GM23248 (cell line): ENCODE measurements at regions of chr22 and their contacts with region 1.

Region 1: DNA sequence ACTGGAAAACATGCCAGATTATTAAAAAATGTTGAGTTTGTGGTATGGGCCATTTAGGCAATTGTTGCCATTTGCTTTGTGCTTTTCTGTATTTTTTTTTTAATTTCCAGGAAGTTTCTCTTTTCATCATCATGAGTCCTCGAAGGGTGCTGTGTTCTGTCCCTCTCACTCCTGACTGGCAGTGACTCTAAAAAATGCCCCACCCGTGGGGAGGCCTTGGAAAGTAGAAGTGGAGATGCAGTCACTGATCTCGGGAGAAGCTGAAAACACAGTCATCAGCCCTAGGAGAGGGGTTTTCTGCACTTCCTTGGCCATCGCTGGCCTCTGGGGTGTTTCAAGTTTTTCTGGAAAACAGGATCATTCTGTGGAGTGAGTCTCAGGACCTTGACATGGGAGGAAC is 98.5 kb upstream of the GRK3 start:
- DNase-seq: no peak
- H3K4me3 ChIP-seq: no peak overlapping the region
- H3K27ac ChIP-seq: no peak overlapping the region
- H3K4me1 ChIP-seq: no peaks in the 10 kb centered on the region
- H3K27me3 ChIP-seq: no peaks in the 10 kb centered on the region

Region 2: GRCh38 chr22:25404928-25405816 is 60.8 kb before region 1 on chr22:
- in situ Hi-C with region 1: no loop called
- DNase-seq: peak; percentile 94
- H3K4me3 ChIP-seq: peak overlapping the region; percentile 86
- H3K27ac ChIP-seq: 0 out of 2 replicates have a peak overlapping the region, but pooled peaks have one; percentile 28
- H3K4me1 ChIP-seq: peaks cover 28% of the 10 kb centered on the region
- H3K27me3 ChIP-seq: no peaks in the 10 kb centered on the region

Region 3: DNA sequence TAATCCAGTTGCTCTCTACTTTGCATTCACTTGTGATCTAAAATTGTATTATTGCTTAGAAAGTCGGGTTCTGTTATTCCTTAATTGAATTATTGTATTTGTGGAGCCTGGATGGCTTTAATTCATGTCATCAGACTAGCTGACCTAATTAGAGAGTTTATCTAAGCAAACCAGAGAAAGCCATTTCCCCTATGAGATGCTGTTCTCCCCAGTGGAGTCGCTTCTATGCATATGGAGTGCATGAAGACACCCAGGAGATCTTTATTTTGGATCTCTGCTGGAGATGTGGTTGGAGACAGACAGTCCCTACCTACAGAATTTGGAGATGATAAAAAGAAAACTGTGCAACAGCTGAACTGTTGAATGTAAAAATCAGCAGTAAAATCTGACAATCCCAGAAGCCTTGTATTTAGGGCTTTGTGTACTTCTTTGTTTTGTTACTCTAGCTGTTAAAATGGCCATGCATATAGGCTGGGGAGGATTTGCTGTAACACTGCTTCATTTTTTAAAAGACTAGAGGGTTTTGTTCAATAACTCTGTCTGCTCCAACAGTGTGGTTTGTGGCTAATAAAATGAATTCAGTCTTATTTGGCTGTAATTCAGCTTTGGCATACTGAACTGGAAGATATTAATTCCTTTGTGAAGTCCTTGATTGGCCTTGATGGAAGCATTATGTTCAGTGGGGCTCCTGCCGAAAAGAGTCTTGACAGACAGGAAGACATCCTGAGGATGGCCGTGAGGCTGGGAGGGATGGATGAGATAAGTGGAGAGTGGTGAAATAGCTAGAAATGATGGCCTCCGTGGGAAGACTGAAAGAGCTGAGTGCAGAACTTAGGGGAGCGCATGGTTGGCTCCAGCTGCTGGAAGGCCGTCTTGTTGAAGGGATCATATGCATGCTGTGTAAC is 231.1 kb after region 1 on chr22:
- in situ Hi-C with region 1: loop called (anchors 10 kb)
- DNase-seq: no peak
- H3K4me3 ChIP-seq: no peak overlapping the region
- H3K27ac ChIP-seq: no peak overlapping the region
- H3K4me1 ChIP-seq: no peaks in the 10 kb centered on the region
- H3K27me3 ChIP-seq: no peaks in the 10 kb centered on the region

Region 4: GRCh38 chr22:26354707-26355106 is 888.8 kb after region 1 on chr22:
- in situ Hi-C with region 1: loop called (anchors 10 kb)
- DNase-seq: no peak
- H3K4me3 ChIP-seq: no peak overlapping the region
- H3K27ac ChIP-seq: no peak overlapping the region
- H3K4me1 ChIP-seq: 0 out of 2 replicates have a peak, but pooled peaks cover under 1% of the 10 kb centered on the region
- H3K27me3 ChIP-seq: 0 out of 2 replicates have a peak, but pooled peaks cover 16% of the 10 kb centered on the region